ENCODE measurements at regions of chr17 and their contacts with region 1.

Region 1: DNA sequence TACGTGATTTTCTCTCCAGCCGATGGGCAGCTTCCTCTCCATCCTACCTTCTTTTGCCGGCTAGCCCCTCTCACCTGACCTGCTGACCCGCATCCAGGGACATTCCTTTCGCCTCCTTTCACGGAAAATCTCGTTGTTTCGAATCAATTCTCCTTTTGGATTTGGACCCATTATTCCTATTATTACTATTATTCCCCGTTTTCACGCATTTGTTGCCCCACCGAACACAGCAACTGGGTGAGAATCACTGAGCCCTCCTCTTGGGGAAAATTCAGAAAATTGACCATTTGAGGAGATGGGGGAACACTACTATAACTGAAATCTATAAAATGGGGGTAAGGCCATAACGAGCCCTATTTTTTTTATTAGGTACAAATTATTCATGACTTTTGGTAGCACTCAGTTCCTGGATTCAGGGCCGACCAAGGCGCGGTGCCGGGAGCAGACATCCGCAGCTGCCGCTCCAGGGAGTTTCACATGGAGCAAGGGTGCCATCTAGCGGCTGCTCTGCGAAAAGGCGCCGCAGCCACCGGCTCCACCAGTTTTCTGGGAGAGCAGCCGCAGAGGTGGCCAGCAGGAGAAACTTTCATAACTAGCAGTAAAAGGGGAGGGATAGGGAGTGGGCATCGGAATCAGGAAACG is 3.3 kb upstream of the HOXB8 start:
- DNase-seq: peak; percentile 71 to 90 (median 83)
- H3K4me3 ChIP-seq: no peak overlapping the region
- H3K27ac ChIP-seq: no peak overlapping the region
- H3K4me1 ChIP-seq: no peaks in the 10 kb centered on the region
- H3K27me3 ChIP-seq: peaks cover 6% of the 10 kb centered on the region
- CTCF ChIP-seq: peak; percentile 81 to 92 (median 90)
- EP300 ChIP-seq: no peak
- POLR2A ChIP-seq: no peak

Region 2: GRCh38 chr17:48024937-48025906 is 593.2 kb before region 1 on chr17:
- intact Hi-C with region 1: loop called in 2 of 4 experiments (anchors 10 kb)
- DNase-seq: peak; percentile 96 to 99 (median 98)
- H3K4me3 ChIP-seq: peak overlapping the region; percentile 38
- H3K27ac ChIP-seq: no peak overlapping the region
- H3K4me1 ChIP-seq: peaks cover 13% of the 10 kb centered on the region
- H3K27me3 ChIP-seq: no peaks in the 10 kb centered on the region
- CTCF ChIP-seq: peak; percentile 62 to 91 (median 80)
- EP300 ChIP-seq: no peak
- POLR2A ChIP-seq: no peak

Region 3: GRCh38 chr17:48335858-48336500 is 282.4 kb before region 1 on chr17:
- intact Hi-C with region 1: loop called in 2 of 4 experiments (anchors 5 to 10 kb)
- DNase-seq: no peak
- H3K4me3 ChIP-seq: no peak overlapping the region
- H3K27ac ChIP-seq: no peak overlapping the region
- H3K4me1 ChIP-seq: no peaks in the 10 kb centered on the region
- H3K27me3 ChIP-seq: no peaks in the 10 kb centered on the region
- CTCF ChIP-seq: no peak
- EP300 ChIP-seq: no peak
- POLR2A ChIP-seq: no peak